ENCODE measurements at regions of chr1 and their contacts with region 1.

Region 1: GRCh38 chr1:212284744-212285684 is at the start of gene PPP2R5A:
- DNase-seq: peak; percentile 99
- H3K4me3 Mint-ChIP-seq: peak within 1 kb of the TSS; percentile 98
- H3K27ac Mint-ChIP-seq: peak within 1 kb of the TSS; percentile 97
- H3K4me1 Mint-ChIP-seq: peaks cover 27% of the 10 kb centered on the region
- H3K27me3 Mint-ChIP-seq: no peaks in the 10 kb centered on the region
- total RNA-seq, gene PPP2R5A: 40.4 and 42.1 TPM in 2 replicates

Region 2: DNA sequence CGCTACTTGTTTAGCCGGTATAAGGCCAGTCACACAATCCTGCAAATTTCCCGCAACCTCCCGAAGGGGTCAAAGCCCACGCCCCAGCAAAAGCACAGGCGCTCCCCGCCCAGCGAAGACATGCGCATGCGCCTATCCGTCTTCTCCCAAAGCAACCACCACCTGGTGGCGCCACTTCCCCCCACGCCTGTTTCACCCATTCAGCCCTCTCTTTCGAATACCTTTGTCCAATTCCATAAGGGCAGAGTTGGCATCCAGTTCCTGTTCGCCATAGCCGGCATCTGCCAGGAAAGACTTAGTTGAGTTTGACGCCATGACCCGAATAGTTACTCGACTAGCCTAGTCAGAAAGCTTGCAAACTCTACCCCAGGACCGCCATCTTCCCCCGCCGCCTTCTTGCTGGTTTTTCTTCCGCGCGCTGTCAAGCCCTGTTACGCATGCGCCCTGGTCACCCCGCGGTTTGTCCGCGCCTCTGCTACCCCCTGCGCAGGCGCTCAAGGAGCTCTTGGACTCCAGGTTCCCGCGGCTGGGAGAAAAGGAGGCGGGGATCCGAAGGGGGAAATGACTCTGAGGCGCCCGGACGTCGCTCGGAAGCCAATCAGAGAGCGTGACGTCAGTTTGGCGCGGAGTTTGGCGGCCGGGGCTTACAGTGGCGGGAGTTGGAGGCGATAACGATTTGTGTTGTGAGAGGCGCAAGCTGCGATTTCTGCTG is 249.7 kb before region 1 on chr1 and contains the starts of genes DTL and INTS7:
- intact Hi-C with region 1: loop called (anchors 1 kb)
- DNase-seq: peak; percentile 99
- H3K4me3 Mint-ChIP-seq: peak within 1 kb of the TSS; percentile 95
- H3K27ac Mint-ChIP-seq: peak within 1 kb of the TSS; percentile 85
- H3K4me1 Mint-ChIP-seq: peaks cover 58% of the 10 kb centered on the region
- H3K27me3 Mint-ChIP-seq: no peaks in the 10 kb centered on the region
- total RNA-seq, gene DTL: 73.9 and 77.0 TPM in 2 replicates
- total RNA-seq, gene INTS7: 33.3 and 33.8 TPM in 2 replicates

Region 3: DNA sequence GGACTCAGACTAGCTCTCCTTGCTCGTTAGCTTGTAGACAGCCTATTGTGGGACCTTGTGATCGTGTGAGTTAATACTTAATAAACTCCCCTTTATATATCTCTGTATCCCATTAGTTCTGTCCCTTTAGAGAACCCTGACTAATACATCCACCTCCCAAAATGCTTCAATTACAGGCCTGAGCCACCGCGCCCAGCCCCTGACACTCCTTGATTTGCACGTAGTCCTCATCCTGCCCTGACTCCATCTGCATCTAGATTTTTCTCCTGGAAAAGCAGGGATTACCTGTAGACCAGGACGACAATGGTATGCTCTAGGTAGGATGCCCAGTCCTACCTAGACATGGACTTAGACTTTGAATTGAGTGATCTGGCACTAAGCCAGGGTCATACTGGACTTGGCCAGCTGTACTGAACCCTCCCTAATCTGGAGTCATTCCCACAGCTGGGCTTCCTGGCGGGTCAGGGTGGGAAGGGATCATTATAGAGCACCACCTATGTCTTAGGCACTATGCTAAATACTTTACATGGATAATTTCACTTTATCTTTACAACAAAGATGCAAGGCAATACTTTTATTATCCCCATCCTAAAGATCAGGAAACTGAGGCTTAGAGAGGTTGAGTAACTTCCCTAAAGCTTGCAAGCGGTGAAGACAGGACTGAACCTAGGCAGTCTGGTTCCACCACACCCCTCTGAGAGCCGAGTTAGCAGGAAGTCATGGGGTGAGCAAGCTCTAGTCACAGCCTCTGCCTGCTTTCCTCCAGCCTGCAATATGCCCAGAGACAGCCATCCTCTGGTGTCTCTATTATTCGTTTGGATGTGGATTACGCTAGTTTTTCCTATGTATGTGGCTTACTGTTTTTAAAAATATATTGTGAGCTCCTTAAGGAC is 160.1 kb before region 1 on chr1:
- intact Hi-C with region 1: loop called (anchors 1 kb)
- DNase-seq: no peak
- H3K4me3 Mint-ChIP-seq: no peak overlapping the region
- H3K27ac Mint-ChIP-seq: no peak overlapping the region
- H3K4me1 Mint-ChIP-seq: peaks cover 27% of the 10 kb centered on the region
- H3K27me3 Mint-ChIP-seq: no peaks in the 10 kb centered on the region

Region 4: GRCh38 chr1:212234431-212235395 is 50.3 kb before region 1 on chr1:
- intact Hi-C with region 1: loop called (anchors 5 kb)
- DNase-seq: no peak
- H3K4me3 Mint-ChIP-seq: peak overlapping the region; percentile 22
- H3K27ac Mint-ChIP-seq: peak overlapping the region; percentile 69
- H3K4me1 Mint-ChIP-seq: peaks cover 49% of the 10 kb centered on the region
- H3K27me3 Mint-ChIP-seq: no peaks in the 10 kb centered on the region

Region 5: DNA sequence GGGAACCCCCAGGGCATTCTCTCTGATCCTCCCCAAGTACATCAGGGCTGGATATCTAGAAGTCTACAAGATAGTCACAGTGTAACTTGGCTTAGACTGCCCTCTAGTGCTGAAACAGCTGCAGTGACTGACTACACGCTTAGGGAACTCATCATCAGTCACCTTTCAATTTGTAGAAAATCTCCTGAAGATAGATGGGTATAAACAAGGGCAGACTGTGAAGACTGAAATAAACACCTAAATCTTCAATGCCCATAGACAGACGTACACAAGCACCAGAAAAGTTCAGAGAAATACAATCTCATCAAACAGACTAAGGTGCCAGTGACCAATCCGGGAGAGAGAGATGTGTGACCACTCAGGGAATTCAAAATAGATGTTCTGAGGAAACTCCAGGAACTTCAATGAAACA is 83.1 kb after region 1 on chr1:
- intact Hi-C with region 1: loop called (anchors 1 kb)
- DNase-seq: peak; percentile 42
- H3K4me3 Mint-ChIP-seq: no peak overlapping the region
- H3K27ac Mint-ChIP-seq: peak overlapping the region; percentile 17
- H3K4me1 Mint-ChIP-seq: peaks cover 4% of the 10 kb centered on the region
- H3K27me3 Mint-ChIP-seq: no peaks in the 10 kb centered on the region

Measured in activated T-helper 2 cell treated with anti-CD3 and anti-CD28 coated beads, Interferon-gamma antibody, Interleukin-2, Interleukin-4, amounts not matched to agents 10 μg/mL and 5 μg/mL and 100 μg/mL, durations not matched to agents 14 hours and 24 hours and 36 hours (primary cell).